CD4-positive, alpha-beta memory T cell (primary cell): ENCODE measurements at regions of chr6 and their contacts with region 1.

Region 1: GRCh38 chr6:24581084-24581669 is 64.8 kb downstream of the KIAA0319 start:
- DNase-seq: peak; percentile 56 to 74 (median 66)
- H3K4me3 ChIP-seq: no peak overlapping the region
- H3K4me3 Mint-ChIP-seq: no peak overlapping the region
- H3K27ac ChIP-seq: no peak overlapping the region
- H3K27ac Mint-ChIP-seq: no peak overlapping the region
- H3K4me1 ChIP-seq: no peaks in the 10 kb centered on the region
- H3K4me1 Mint-ChIP-seq: peaks cover 0 to 3% (median under 1%) of the 10 kb centered on the region in 4 donors
- H3K27me3 ChIP-seq: no peaks in the 10 kb centered on the region
- H3K27me3 Mint-ChIP-seq: peaks cover 0 to 2% of the 10 kb centered on the region in 2 donors

Region 2: DNA sequence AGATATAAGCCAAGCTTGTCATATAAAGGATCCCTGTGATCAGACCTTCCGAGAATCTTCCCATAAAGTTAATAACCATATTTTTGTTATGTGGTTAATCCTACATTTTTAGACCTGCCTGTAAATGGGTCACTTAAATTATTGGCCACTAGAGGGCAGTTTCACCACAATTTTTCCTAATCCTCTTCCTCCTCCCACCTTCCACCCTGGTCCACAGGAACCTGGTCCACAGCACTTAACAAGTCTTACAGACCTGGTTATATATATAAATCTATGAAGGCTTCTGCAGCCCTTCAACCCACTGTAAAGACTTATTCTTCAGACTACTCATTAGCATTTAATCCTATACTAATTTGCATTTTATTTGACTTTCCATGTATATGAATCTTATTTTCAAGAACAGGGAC is 150.1 kb before region 1 on chr6:
- CTCF ChIA-PET with region 1: no interaction called
- POLR2A ChIA-PET with region 1: no interaction called
- intact Hi-C with region 1: loop called (anchors 1 kb)
- DNase-seq: peak in 4 of 5 donors; percentile 15 to 33 (median 28)
- H3K4me3 ChIP-seq: no peak overlapping the region
- H3K4me3 Mint-ChIP-seq: no peak overlapping the region
- H3K27ac ChIP-seq: no peak overlapping the region
- H3K27ac Mint-ChIP-seq: no peak overlapping the region
- H3K4me1 ChIP-seq: no peaks in the 10 kb centered on the region
- H3K4me1 Mint-ChIP-seq: peaks cover 0 to 1% (median 0%) of the 10 kb centered on the region in 4 donors
- H3K27me3 ChIP-seq: no peaks in the 10 kb centered on the region
- H3K27me3 Mint-ChIP-seq: no peaks in the 10 kb centered on the region

Region 3: DNA sequence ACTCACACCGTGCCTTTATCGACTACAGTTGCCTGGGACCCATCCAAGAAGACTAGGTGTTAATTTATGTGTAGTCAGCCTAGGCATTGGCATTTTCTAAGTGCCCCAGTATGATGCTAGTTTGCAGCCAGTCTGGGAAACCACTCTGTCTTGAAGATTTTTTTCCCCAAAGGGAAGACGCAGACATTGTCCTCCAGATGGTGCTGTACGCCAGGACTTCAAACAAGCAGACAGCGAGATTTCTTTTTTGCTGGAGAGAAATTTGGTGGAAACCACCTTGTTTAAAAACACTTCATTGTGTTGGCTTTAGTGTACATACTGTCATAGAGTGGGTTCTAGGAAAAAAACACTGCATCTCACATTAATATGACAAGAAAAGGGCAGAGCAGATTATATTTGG is 56.4 kb before region 1 on chr6:
- CTCF ChIA-PET with region 1: no interaction called
- POLR2A ChIA-PET with region 1: no interaction called
- intact Hi-C with region 1: no loop called
- DNase-seq: no peak
- H3K4me3 ChIP-seq: no peak overlapping the region
- H3K4me3 Mint-ChIP-seq: no peak overlapping the region
- H3K27ac ChIP-seq: no peak overlapping the region
- H3K27ac Mint-ChIP-seq: no peak overlapping the region
- H3K4me1 ChIP-seq: no peaks in the 10 kb centered on the region
- H3K4me1 Mint-ChIP-seq: peaks cover 0 to 7% (median 3%) of the 10 kb centered on the region in 4 donors
- H3K27me3 ChIP-seq: no peaks in the 10 kb centered on the region
- H3K27me3 Mint-ChIP-seq: no peaks in the 10 kb centered on the region

Region 4: GRCh38 chr6:24595512-24596217 is 14.5 kb after region 1 on chr6:
- CTCF ChIA-PET with region 1: interaction called, 31 read pairs
- POLR2A ChIA-PET with region 1: no interaction called
- intact Hi-C with region 1: no loop called
- DNase-seq: no peak
- H3K4me3 ChIP-seq: no peak overlapping the region
- H3K4me3 Mint-ChIP-seq: no peak overlapping the region
- H3K27ac ChIP-seq: no peak overlapping the region
- H3K27ac Mint-ChIP-seq: no peak overlapping the region
- H3K4me1 ChIP-seq: no peaks in the 10 kb centered on the region
- H3K4me1 Mint-ChIP-seq: peaks cover 0 to 1% (median 0%) of the 10 kb centered on the region in 4 donors
- H3K27me3 ChIP-seq: no peaks in the 10 kb centered on the region
- H3K27me3 Mint-ChIP-seq: peaks cover 3 to 5% of the 10 kb centered on the region in 2 donors

Region 5: GRCh38 chr6:24689964-24690363 is 108.8 kb after region 1 on chr6:
- CTCF ChIA-PET with region 1: interaction called, 185 read pairs
- POLR2A ChIA-PET with region 1: interaction called, 3 read pairs
- intact Hi-C with region 1: loop called (anchors 1 kb)
- DNase-seq: no peak
- H3K4me3 ChIP-seq: no peak overlapping the region
- H3K4me3 Mint-ChIP-seq: no peak overlapping the region
- H3K27ac ChIP-seq: no peak overlapping the region
- H3K27ac Mint-ChIP-seq: no peak overlapping the region
- H3K4me1 ChIP-seq: no peaks in the 10 kb centered on the region
- H3K4me1 Mint-ChIP-seq: peaks cover 0 to 8% (median 4%) of the 10 kb centered on the region in 4 donors
- H3K27me3 ChIP-seq: no peaks in the 10 kb centered on the region
- H3K27me3 Mint-ChIP-seq: no peaks in the 10 kb centered on the region

Region 6: GRCh38 chr6:24766680-24767462 is 185.7 kb after region 1 on chr6:
- CTCF ChIA-PET with region 1: interaction called, 57 read pairs
- POLR2A ChIA-PET with region 1: no interaction called
- intact Hi-C with region 1: loop called (anchors 1 kb)
- DNase-seq: peak in 4 of 5 donors; percentile 22 to 39 (median 34)
- H3K4me3 ChIP-seq: no peak overlapping the region
- H3K4me3 Mint-ChIP-seq: no peak overlapping the region
- H3K27ac ChIP-seq: no peak overlapping the region
- H3K27ac Mint-ChIP-seq: no peak overlapping the region
- H3K4me1 ChIP-seq: no peaks in the 10 kb centered on the region
- H3K4me1 Mint-ChIP-seq: peaks cover 0 to 2% (median under 1%) of the 10 kb centered on the region in 4 donors
- H3K27me3 ChIP-seq: no peaks in the 10 kb centered on the region
- H3K27me3 Mint-ChIP-seq: no peaks in the 10 kb centered on the region

Region 7: GRCh38 chr6:24929242-24929641 is 348.1 kb after region 1 on chr6:
- CTCF ChIA-PET with region 1: no interaction called
- POLR2A ChIA-PET with region 1: no interaction called
- intact Hi-C with region 1: no loop called
- DNase-seq: no peak
- H3K4me3 ChIP-seq: peak overlapping the region; percentile 63 to 67
- H3K4me3 Mint-ChIP-seq: peak overlapping the region; percentile 96 to 100 (median 99)
- H3K27ac ChIP-seq: peak overlapping the region; percentile 53
- H3K27ac Mint-ChIP-seq: peak overlapping the region; percentile 87 to 97 (median 97)
- H3K4me1 ChIP-seq: peaks cover 77% of the 10 kb centered on the region
- H3K4me1 Mint-ChIP-seq: peaks cover 39 to 77% (median 57%) of the 10 kb centered on the region in 4 donors
- H3K27me3 ChIP-seq: no peaks in the 10 kb centered on the region
- H3K27me3 Mint-ChIP-seq: peaks cover 0 to 1% of the 10 kb centered on the region in 2 donors

Region 8: DNA sequence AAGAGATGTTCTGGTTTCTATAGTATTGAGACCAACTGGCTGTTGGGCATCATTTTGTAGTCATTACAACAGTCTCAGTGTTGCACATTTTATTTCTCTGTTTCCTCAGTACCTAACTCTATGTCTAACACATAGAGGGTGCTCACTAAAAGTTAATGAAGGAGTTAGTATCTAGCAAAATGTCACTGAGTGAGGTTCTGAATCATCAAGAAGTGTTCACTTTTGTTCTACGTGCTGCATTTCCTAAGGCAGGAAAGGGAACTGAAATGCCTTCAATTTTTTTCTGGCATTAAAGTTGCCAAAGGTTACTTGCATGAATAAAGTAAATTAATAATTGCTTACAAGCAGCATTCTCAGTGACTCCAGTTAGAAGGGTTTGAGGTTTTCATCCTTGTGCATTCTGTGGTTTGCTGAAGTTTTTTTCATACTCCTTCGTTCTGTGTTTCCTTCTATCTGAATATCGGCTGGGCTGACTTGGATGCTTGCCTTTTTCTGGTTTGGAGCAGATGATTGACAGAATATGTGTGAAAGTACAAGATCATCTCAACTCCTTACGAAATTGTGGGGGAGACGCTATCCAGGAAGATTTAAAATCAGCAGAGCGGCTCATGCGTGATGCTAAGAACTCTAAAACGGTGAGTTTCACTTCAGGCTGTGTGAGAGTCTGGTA is 956.3 kb after region 1 on chr6:
- CTCF ChIA-PET with region 1: no interaction called
- POLR2A ChIA-PET with region 1: no interaction called
- intact Hi-C with region 1: no loop called
- DNase-seq: no peak
- H3K4me3 ChIP-seq: no peak overlapping the region
- H3K4me3 Mint-ChIP-seq: no peak overlapping the region
- H3K27ac ChIP-seq: no peak overlapping the region
- H3K27ac Mint-ChIP-seq: no peak overlapping the region
- H3K4me1 ChIP-seq: no peaks in the 10 kb centered on the region
- H3K4me1 Mint-ChIP-seq: no peaks in the 10 kb centered on the region
- H3K27me3 ChIP-seq: no peaks in the 10 kb centered on the region
- H3K27me3 Mint-ChIP-seq: no peaks in the 10 kb centered on the region

Region 9: DNA sequence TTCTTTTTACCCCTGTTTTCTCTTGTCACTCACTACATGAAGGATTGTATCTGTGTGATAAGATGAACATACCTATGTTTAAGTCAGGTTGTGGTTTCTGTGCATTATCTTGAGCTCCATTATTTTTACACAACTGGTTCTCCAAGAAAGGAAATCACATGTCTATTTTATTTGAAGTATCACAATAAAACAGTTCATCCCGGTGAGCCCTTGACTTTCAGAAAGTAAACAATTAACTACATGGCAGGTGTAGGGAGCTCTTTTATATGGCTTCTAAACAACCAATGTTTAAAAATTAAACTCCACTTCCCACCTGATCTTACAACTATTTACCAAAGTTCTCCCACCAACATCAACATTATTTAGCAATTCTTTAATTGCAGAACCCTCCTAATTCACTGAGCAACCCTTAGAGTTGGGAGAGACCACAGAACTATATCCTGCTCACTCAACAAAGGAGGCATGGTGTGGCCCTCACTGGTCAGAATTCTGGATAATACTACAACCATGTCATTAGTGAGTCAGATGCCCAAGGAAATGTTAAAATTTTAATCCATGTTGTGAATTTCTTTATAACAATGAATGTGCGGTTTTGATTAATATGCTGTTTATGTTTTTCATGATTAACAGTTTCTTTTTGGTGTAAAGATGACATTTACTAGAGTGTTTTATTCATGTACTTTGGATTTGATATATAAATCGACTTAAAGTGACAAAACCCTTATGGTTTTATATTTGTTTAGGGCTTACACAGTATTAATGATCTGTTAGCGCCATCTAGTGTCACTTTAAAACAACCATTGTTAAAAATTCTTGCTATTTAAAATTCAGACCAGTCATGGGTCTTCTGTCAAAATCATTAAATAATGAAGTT is 1020.9 kb after region 1 on chr6:
- CTCF ChIA-PET with region 1: no interaction called
- POLR2A ChIA-PET with region 1: no interaction called
- intact Hi-C with region 1: no loop called
- DNase-seq: peak in 4 of 5 donors; percentile 35 to 46 (median 40)
- H3K4me3 ChIP-seq: no peak overlapping the region
- H3K4me3 Mint-ChIP-seq: no peak overlapping the region
- H3K27ac ChIP-seq: no peak overlapping the region
- H3K27ac Mint-ChIP-seq: no peak overlapping the region
- H3K4me1 ChIP-seq: no peaks in the 10 kb centered on the region
- H3K4me1 Mint-ChIP-seq: peaks cover 0 to 1% (median 0%) of the 10 kb centered on the region in 4 donors
- H3K27me3 ChIP-seq: no peaks in the 10 kb centered on the region
- H3K27me3 Mint-ChIP-seq: no peaks in the 10 kb centered on the region